Activated CD4-positive, alpha-beta T cell treated with anti-CD3 and anti-CD28 coated beads for 36 hours (primary cell): ENCODE measurements at regions of chr2 and their contacts with region 1.

Region 1: DNA sequence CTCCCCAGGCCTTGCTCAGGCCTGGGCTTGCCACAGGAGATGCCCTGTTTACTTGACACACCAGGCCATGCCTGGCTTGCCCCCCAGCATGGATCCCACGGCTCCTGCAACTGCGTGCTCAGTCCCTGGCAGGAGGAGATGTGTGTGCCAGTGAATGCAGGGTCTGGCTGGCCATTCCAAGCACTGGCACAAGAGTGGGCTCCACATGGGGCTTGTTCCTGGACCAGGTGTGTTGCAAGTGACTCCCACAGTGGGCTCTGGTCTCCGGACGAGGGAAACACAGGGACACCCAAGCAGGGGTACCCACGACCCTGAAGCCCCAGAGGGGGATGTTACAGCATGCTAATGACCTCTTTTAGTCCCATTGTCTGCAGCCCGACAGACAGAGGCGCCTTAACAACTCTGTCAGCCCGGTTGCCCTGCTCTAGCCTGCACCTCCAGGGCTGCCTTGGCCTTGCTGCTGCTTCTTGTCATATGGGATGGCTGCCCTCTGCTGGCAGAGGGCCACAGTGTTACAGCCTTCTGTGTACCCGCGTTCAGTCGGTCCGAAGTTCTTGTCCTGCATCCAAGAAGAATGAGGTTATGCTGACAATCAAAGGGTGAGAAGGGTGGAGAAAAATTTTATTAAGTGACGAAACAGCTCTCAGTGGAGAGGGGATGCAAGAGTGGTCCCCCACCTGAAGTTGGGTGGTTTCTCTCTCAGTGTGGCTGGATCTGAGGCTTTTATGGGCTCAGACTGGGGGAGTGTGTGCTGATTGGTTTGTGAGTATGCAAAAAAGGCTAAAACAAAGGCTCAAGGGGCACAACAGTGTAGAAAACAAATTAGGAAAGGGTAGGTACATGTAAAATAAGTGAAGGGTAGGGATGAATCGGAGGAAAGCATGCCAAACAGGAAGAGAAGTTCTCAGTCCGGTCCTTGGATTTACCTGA is 180.4 kb downstream of the MBD5 start:
- DNase-seq: peak; percentile 70
- ATAC-seq: peak; percentile 84
- H3K4me3 Mint-ChIP-seq: no peak overlapping the region
- H3K27ac Mint-ChIP-seq: no peak overlapping the region
- H3K4me1 Mint-ChIP-seq: no peaks in the 10 kb centered on the region
- H3K27me3 Mint-ChIP-seq: no peaks in the 10 kb centered on the region

Region 2: GRCh38 chr2:147937744-147938349 is 263.5 kb before region 1 on chr2:
- CTCF ChIA-PET with region 1: interaction called, 5 read pairs
- POLR2A ChIA-PET with region 1: no interaction called
- intact Hi-C with region 1: loop called (anchors 5 kb)
- DNase-seq: no peak
- ATAC-seq: no peak
- H3K4me3 Mint-ChIP-seq: no peak overlapping the region
- H3K27ac Mint-ChIP-seq: no peak overlapping the region
- H3K4me1 Mint-ChIP-seq: no peaks in the 10 kb centered on the region
- H3K27me3 Mint-ChIP-seq: no peaks in the 10 kb centered on the region

Region 3: GRCh38 chr2:147989809-147990403 is 211.4 kb before region 1 on chr2:
- CTCF ChIA-PET with region 1: interaction called, 7 read pairs
- POLR2A ChIA-PET with region 1: no interaction called
- intact Hi-C with region 1: loop called in 1 of 2 experiments (anchors 1 kb)
- DNase-seq: peak; percentile 15
- ATAC-seq: peak; percentile 47
- H3K4me3 Mint-ChIP-seq: no peak overlapping the region
- H3K27ac Mint-ChIP-seq: no peak overlapping the region
- H3K4me1 Mint-ChIP-seq: peaks cover 9% of the 10 kb centered on the region
- H3K27me3 Mint-ChIP-seq: no peaks in the 10 kb centered on the region